ENCODE measurements at regions of chr5 and their contacts with region 1.

Region 1: GRCh38 chr5:172795318-172795977 is 24.5 kb upstream of the DUSP1 start:
- DNase-seq: peak; percentile 93 to 99
- H3K4me3 ChIP-seq: peak overlapping the region in 1 of 2 donors; percentile 33
- H3K27ac ChIP-seq: peak overlapping the region; percentile 94 to 95
- H3K4me1 ChIP-seq: peaks cover 23 to 75% of the 10 kb centered on the region in 2 donors
- H3K27me3 ChIP-seq: no peaks in the 10 kb centered on the region
- CTCF ChIP-seq: no peak

Region 2: DNA sequence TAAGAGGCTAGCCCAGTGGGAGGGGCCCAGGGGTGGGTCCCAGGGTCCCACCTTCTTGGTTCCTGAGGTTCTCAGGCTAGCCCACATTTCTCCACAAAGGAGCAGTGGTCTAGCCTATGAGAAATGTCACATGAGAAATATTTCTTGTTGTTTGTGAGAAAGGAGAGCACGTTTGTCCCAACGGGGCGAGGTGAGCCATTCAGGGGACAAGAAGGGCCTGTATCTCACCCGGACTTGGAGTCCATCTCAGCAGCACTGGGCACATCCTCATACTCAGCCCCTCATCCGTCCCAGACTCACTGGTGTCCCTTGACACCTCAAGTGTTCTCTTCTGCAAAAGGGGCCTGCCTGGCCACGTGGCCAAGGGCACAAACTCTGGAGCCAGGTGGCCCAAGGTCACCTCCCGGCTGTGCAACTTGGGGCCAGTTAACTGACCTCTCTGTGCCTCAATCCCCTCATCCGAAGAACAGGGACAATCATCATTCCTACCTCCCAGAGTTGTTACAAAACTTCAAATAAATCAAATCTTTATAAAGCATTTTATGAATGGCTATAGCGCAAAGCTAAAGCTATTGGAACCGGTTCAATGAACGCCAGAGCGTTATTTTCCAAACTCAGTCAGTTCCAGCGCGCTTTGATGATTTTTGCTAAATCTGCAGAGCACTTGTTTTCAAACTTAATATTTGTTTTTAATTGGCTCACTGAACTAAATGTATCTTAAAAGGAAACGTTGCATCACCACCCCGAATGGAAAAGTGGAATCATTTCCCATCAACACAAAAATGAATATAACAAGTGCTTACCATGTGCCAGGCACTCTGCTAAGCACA is 73.9 kb before region 1 on chr5:
- intact Hi-C with region 1: loop called (anchors 2 kb)
- DNase-seq: peak in 1 of 2 donors; percentile 86
- H3K4me3 ChIP-seq: peak overlapping the region; percentile 15 to 18
- H3K27ac ChIP-seq: peak overlapping the region; percentile 54 to 68
- H3K4me1 ChIP-seq: peaks cover 4 to 23% of the 10 kb centered on the region in 2 donors
- H3K27me3 ChIP-seq: no peaks in the 10 kb centered on the region
- CTCF ChIP-seq: no peak

Region 3: GRCh38 chr5:172740428-172741201 is 54.8 kb before region 1 on chr5:
- intact Hi-C with region 1: no loop called
- DNase-seq: peak; percentile 71 to 96
- H3K4me3 ChIP-seq: peak overlapping the region in 1 of 2 donors; percentile 10
- H3K27ac ChIP-seq: peak overlapping the region; percentile 94 to 96
- H3K4me1 ChIP-seq: peaks cover 20 to 41% of the 10 kb centered on the region in 2 donors
- H3K27me3 ChIP-seq: no peaks in the 10 kb centered on the region
- CTCF ChIP-seq: no peak

Region 4: GRCh38 chr5:172770675-172771438 is 24.6 kb before region 1 on chr5 and contains the start of gene DUSP1:
- intact Hi-C with region 1: loop called (anchors 1 kb)
- DNase-seq: peak; percentile 97 to 100
- H3K4me3 ChIP-seq: peak within 1 kb of the TSS; percentile 88 to 89
- H3K27ac ChIP-seq: peak within 1 kb of the TSS; percentile 97 to 100
- H3K4me1 ChIP-seq: peaks cover 13 to 31% of the 10 kb centered on the region in 2 donors
- H3K27me3 ChIP-seq: no peaks in the 10 kb centered on the region
- CTCF ChIP-seq: no peak
- total RNA-seq, gene DUSP1: 3,919 TPM

Region 5: DNA sequence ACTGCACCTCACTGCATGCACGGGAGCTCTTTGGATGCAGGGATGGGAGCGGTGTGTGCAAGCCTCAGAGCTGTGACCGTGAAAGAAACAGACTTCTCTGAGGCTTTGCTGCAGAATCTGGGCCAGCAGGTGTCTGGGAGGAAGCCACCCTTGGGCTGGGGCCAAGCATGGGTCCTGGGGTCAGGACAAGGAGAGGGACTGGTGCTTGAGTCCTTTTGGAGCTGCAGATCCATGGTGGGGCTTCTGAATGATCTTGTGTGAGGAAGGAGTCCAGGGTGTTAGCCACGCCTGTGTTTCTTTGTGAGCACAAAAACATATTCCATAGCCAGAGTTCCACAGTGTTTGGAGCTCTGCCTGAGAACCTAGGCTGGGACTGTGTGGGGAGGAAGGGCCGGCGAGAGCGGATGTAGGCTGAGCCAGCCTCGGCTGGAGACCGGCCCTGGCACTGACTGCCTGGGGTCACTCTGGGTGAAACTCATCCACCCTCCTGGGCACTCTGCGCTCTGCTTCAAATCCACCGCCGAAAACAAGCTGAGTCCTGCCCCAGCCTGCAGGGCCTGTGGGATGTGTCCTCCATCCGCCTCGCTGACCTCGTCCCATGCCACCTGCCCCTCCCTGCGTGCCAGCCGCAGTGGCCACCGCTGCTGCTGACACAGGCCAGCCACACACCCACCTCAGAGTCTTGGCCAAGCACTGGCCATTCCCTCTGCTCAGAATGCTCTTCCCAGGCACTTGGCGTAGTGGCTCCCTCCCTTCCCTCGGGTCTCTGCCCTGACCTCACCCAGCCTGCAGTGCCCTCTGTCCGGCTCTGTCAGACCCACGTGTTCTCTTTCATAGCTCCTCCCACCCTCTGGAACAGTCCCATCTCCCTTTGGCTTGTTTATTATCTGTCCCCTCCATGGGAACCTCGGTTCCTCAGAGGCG is 65.3 kb after region 1 on chr5:
- intact Hi-C with region 1: loop called (anchors 1 kb)
- DNase-seq: peak; percentile 65 to 97
- H3K4me3 ChIP-seq: peak overlapping the region; percentile 1 to 51
- H3K27ac ChIP-seq: peak overlapping the region; percentile 88 to 97
- H3K4me1 ChIP-seq: peaks cover 28 to 59% of the 10 kb centered on the region in 2 donors
- H3K27me3 ChIP-seq: no peaks in the 10 kb centered on the region
- CTCF ChIP-seq: no peak

Region 6: GRCh38 chr5:172902497-172903200 is 107.2 kb after region 1 on chr5:
- intact Hi-C with region 1: loop called (anchors 2 kb)
- DNase-seq: peak in 1 of 2 donors; percentile 95
- H3K4me3 ChIP-seq: peak overlapping the region in 1 of 2 donors; percentile 5
- H3K27ac ChIP-seq: peak overlapping the region; percentile 96 to 97
- H3K4me1 ChIP-seq: peaks cover 42 to 77% of the 10 kb centered on the region in 2 donors
- H3K27me3 ChIP-seq: no peaks in the 10 kb centered on the region
- CTCF ChIP-seq: peak; percentile 24 to 58 (median 58)